IMR-90 (cell line): ENCODE measurements at regions of chr1 and their contacts with region 1.

Region 1: GRCh38 chr1:206982216-206982615 is 12.0 kb upstream of the FCAMR start:
- DNase-seq: peak; percentile 22
- ATAC-seq: peak; percentile 82
- H3K4me3 ChIP-seq: no peak overlapping the region
- H3K27ac ChIP-seq: no peak overlapping the region
- H3K4me1 ChIP-seq: no peaks in the 10 kb centered on the region
- H3K27me3 ChIP-seq: peaks cover 37% of the 10 kb centered on the region
- CTCF ChIP-seq: peak; percentile 65
- POLR2A ChIP-seq: no peak
- RAD21 ChIP-seq: peak; percentile 72

Region 2: DNA sequence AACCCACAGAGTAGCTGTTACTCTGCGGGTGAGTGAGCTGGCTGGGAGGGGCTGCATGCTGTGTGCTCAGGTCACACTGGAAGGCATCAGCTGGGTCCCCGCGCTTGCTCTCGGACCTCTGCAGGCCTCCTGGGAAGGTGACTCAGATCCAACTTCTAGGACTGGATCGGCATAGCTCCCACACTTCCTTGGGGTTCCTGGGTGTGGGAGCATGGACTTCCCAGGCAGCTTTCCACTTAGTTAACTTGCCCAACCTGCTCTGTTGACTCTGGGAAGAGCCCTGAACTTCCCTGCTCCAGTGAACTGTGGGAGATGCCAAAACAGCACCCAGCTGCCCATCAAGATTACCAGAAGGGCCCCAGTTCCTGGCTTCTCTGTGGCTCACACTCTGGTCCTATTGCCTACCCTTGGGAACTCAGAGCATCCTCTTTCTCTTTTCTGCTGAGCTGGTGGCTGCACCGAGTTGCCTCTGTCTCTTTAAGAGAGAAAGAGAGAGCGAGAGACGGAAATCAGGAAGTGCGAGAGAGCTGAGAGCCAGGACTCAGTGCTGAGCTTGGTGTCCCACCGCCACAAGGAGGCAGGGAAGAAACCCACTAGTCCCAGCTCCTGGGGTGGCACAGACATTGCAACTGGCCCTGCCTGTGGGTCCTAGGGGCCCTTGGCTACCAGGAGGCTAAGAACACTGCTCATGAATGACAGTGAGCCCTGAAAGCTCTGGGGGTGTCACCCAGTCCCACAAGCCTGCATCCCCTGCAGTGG is 512.1 kb before region 1 on chr1 and contains the start of gene IKBKE:
- CTCF ChIA-PET with region 1: no interaction called
- POLR2A ChIA-PET with region 1: no interaction called
- dilution Hi-C with region 1: no loop called
- in situ Hi-C with region 1: no loop called
- intact Hi-C with region 1: loop called (anchors 10 kb)
- DNase-seq: peak; percentile 73
- ATAC-seq: peak; percentile 73
- H3K4me3 ChIP-seq: peak within 1 kb of the TSS; percentile 72
- H3K27ac ChIP-seq: peak within 1 kb of the TSS; percentile 87
- H3K4me1 ChIP-seq: peaks cover 24% of the 10 kb centered on the region
- H3K27me3 ChIP-seq: no peaks in the 10 kb centered on the region
- CTCF ChIP-seq: peak; percentile 33
- POLR2A ChIP-seq: no peak; the same call in 1 of the 2 replicates
- RAD21 ChIP-seq: peak; percentile 19; the same call in 1 of the 2 replicates
- total RNA-seq, gene IKBKE: 21.4 and 24.0 TPM in 2 replicates

Region 3: DNA sequence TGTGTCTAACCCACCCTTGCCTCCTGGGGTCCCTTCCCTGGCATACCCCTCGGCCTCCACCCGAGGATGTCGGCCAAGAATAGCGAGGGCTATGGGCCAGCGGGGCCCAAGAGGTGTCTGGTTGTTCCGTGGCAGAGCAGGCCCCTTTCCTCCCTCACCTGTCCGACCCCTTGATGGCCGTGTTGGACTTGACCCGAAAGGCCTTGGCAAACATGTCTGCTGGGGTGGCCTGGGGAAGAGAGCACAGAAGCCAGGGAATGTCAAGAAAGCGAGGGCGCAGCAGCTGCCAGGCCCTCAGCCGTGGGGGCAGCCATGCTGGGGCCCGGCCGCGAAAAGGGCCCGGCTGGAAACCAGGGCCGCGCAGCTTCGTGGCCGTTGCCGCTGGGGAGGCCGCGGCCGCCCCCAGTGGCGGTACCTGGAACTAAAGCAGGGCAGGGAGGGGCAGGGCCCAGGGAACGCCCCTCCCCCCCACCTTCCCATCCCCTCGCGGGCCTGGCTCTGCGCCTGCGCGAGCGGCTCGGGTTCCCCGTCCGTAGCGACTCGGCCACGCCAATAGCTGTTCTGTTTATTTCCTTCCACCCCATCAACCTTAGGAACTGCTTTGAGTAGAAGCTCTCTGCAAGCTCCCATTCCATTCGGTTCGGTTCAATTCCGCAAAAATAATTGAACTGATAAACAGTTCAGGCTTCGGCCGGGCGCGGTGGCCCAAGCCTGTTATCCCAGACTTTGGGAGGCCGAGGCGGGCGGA is 369.9 kb before region 1 on chr1 and contains the start of gene EIF2D:
- CTCF ChIA-PET with region 1: interaction called, 3 read pairs
- POLR2A ChIA-PET with region 1: no interaction called
- dilution Hi-C with region 1: no loop called
- in situ Hi-C with region 1: no loop called
- intact Hi-C with region 1: loop called (anchors 5 kb)
- DNase-seq: peak; percentile 87
- ATAC-seq: peak; percentile 100
- H3K4me3 ChIP-seq: peak within 1 kb of the TSS; percentile 71
- H3K27ac ChIP-seq: peak within 1 kb of the TSS; percentile 96
- H3K4me1 ChIP-seq: peaks cover 4% of the 10 kb centered on the region
- H3K27me3 ChIP-seq: peaks cover 4% of the 10 kb centered on the region; the same call in 1 of the 2 replicates
- CTCF ChIP-seq: peak; percentile 99
- POLR2A ChIP-seq: peak; percentile 97
- RAD21 ChIP-seq: peak; percentile 61
- total RNA-seq, gene EIF2D: 51.7 and 69.4 TPM in 2 replicates

Region 4: DNA sequence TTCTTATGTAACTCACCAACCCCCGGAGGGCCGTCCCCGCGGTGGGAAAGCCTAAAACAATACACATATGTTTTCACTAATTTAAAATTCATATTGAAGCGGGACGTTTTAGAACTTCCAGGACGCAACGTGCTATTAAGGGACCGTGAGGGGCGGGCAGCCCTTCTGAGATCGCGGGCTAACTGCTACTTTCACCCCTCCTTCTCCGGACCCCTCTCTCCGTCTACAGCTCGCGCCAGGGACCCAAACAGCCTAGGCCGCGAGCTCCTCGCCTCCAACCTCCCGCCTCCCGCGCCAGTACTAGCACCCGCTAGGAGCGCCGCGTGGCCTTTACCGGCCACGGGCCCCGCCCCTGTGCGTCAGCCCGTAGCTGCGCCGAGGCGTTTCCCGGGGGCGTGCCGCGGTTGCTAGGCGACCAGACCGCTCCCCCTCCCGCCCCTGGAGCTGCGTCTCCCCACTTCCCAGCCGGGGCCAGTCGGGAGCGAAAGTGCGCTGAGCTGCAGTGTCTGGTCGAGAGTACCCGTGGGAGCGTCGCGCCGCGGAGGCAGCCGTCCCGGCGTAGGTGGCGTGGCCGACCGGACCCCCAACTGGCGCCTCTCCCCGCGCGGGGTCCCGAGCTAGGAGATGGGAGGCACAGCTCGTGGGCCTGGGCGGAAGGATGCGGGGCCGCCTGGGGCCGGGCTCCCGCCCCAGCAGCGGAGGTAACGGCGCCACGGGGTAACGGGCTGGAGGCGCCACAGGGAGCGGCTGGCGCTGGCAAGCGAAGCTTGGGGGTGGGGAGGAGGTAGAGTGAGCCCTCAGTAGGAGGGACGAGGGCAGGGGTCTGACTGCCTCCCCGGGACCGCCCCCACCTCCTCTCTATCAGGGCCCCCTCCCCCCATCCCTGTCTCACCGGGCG is 346.9 kb before region 1 on chr1 and contains the start of gene DYRK3:
- CTCF ChIA-PET with region 1: interaction called, 6 read pairs
- POLR2A ChIA-PET with region 1: no interaction called
- dilution Hi-C with region 1: no loop called
- in situ Hi-C with region 1: no loop called
- intact Hi-C with region 1: loop called (anchors 10 kb)
- DNase-seq: peak; percentile 92
- ATAC-seq: peak; percentile 88
- H3K4me3 ChIP-seq: peak within 1 kb of the TSS; percentile 94
- H3K27ac ChIP-seq: peak within 1 kb of the TSS; percentile 69
- H3K4me1 ChIP-seq: peaks cover 8% of the 10 kb centered on the region
- H3K27me3 ChIP-seq: no peaks in the 10 kb centered on the region
- CTCF ChIP-seq: peak; percentile 8; the same call in 1 of the 2 replicates
- POLR2A ChIP-seq: peak; percentile 96
- RAD21 ChIP-seq: no peak
- total RNA-seq, gene DYRK3: 21.1 and 22.0 TPM in 2 replicates

Region 5: GRCh38 chr1:206734499-206735142 is 247.6 kb before region 1 on chr1:
- CTCF ChIA-PET with region 1: no interaction called
- POLR2A ChIA-PET with region 1: no interaction called
- dilution Hi-C with region 1: no loop called
- in situ Hi-C with region 1: no loop called
- intact Hi-C with region 1: loop called (anchors 10 kb)
- DNase-seq: peak; percentile 37
- ATAC-seq: peak; percentile 70
- H3K4me3 ChIP-seq: no peak overlapping the region
- H3K27ac ChIP-seq: no peak overlapping the region
- H3K4me1 ChIP-seq: peaks cover 13% of the 10 kb centered on the region
- H3K27me3 ChIP-seq: no peaks in the 10 kb centered on the region
- CTCF ChIP-seq: peak; percentile 78
- POLR2A ChIP-seq: no peak
- RAD21 ChIP-seq: peak; percentile 84

Region 6: DNA sequence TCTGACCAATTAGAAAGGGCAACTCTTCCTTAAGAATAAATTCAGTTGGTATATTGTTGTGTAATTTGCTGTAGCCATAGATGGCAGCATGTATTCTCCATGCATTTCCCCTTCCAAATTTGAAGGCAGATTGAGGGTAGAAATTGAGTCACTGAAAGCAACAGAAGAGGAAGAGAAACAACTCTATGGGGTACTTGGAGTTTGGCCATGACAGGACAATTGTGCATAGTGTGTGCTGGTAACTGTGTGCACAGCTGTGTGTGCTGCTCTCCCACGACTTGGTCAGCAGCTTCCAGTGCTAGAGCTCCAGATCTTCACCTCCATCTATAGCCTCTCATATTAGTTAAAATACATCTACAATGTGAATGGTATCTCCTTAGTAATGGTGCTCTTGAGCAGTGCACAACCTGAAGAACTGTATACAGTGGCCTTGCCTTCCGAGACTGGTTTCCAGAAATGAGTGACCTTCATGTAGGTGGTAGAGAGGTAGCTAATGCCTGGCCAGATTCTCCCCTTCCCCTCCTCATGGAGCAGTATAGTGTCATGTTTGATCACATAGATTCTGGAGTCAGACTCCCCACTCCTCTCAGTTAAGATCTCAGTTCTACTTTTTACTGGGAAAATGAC is 11.1 kb before region 1 on chr1:
- CTCF ChIA-PET with region 1: interaction called, 12 read pairs
- POLR2A ChIA-PET with region 1: no interaction called
- dilution Hi-C with region 1: no loop called
- in situ Hi-C with region 1: no loop called
- intact Hi-C with region 1: no loop called
- DNase-seq: no peak
- ATAC-seq: no peak
- H3K4me3 ChIP-seq: no peak overlapping the region
- H3K27ac ChIP-seq: no peak overlapping the region
- H3K4me1 ChIP-seq: no peaks in the 10 kb centered on the region
- H3K27me3 ChIP-seq: peaks cover 46% of the 10 kb centered on the region
- CTCF ChIP-seq: no peak
- POLR2A ChIP-seq: no peak
- RAD21 ChIP-seq: no peak

Region 7: DNA sequence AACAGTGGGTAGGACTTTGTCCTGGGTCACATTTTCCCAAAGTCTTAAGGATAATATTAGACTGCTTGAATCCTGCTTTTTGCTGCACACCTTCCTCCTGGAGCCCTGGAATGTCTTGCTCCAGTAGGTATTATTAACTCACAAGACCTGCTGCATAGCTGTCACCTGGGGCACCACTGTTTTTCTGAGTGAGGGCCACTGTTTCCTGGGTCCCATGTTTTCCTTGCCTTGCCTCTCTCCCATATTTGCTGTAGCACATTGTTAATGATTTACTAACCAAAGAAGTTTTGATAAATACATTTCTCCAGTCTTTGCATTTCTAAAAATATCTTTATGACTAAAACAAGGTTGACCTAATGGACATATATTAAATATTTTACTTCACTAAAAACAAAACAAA is 10.6 kb after region 1 on chr1:
- CTCF ChIA-PET with region 1: interaction called, 13 read pairs
- POLR2A ChIA-PET with region 1: no interaction called
- dilution Hi-C with region 1: no loop called
- in situ Hi-C with region 1: no loop called
- intact Hi-C with region 1: no loop called
- DNase-seq: no peak
- ATAC-seq: no peak
- H3K4me3 ChIP-seq: no peak overlapping the region
- H3K27ac ChIP-seq: no peak overlapping the region
- H3K4me1 ChIP-seq: no peaks in the 10 kb centered on the region
- H3K27me3 ChIP-seq: peaks cover 30% of the 10 kb centered on the region
- CTCF ChIP-seq: no peak
- POLR2A ChIP-seq: no peak
- RAD21 ChIP-seq: no peak